Activated CD4-positive, alpha-beta T cell treated with anti-CD3 and anti-CD28 coated beads for 36 hours (primary cell): ENCODE measurements at regions of chr17 and their contacts with region 1.

Region 1: DNA sequence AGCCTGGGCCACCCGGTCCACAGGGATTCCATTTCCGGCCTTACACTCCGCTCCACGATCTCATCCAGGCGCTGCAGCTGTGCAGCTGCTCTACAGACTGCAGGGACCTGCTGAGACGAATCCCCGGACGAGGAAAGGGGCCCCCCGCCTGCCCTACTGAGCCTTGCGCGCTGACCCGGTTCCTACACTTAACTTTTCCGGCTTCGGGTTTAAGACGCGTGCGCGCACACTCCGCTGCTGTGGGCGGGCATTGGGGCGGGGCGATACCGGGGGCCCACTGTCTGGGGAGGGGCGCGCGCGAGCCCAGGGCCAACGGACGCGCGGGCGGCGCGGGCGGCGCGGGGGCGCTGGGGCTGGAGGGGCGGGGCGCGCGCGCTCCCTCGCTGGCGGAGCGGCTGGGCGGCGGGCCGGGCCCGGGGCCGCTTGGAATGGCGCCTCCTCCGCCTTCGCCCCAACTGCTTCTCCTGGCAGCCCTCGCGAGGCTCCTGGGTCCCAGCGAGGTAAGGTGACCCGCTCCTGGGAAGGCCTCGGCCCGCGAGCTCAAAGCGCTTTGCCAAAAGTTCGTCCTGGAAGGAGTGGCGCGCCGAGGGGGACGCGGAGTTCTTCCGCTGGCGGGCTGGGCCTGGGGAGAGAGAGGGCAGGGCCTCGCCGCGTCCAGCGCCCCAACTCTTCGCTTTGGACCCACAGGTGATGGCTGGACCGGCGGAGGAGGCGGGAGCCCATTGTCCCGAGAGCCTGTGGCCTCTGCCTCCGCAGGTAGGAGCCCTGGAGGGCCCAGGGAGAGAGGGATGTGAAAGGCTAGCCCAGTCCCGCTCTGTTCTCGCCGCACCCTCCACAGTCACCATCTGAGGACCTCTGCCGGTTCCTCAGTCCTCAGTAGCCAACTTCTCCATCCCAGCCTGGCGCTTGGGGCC is at the start of gene TP53I13:
- DNase-seq: peak; percentile 96
- ATAC-seq: peak; percentile 64
- H3K4me3 Mint-ChIP-seq: peak within 1 kb of the TSS; percentile 97
- H3K27ac Mint-ChIP-seq: peak within 1 kb of the TSS; percentile 96
- H3K4me1 Mint-ChIP-seq: peaks cover 30% of the 10 kb centered on the region
- H3K27me3 Mint-ChIP-seq: no peaks in the 10 kb centered on the region
- total RNA-seq, gene TP53I13: 37.7 to 41.5 TPM

Region 2: GRCh38 chr17:28661635-28662537 is 906.7 kb before region 1 on chr17 and contains the starts of genes SDF2 and SUPT6H:
- CTCF ChIA-PET with region 1: no interaction called
- POLR2A ChIA-PET with region 1: no interaction called
- intact Hi-C with region 1: loop called in 1 of 2 experiments (anchors 5 kb)
- DNase-seq: peak; percentile 98
- ATAC-seq: peak; percentile 87
- H3K4me3 Mint-ChIP-seq: peak within 1 kb of the TSS; percentile 94
- H3K27ac Mint-ChIP-seq: peak within 1 kb of the TSS; percentile 99
- H3K4me1 Mint-ChIP-seq: peaks cover 48% of the 10 kb centered on the region
- H3K27me3 Mint-ChIP-seq: no peaks in the 10 kb centered on the region
- total RNA-seq, gene SDF2: 36.6 to 37.2 TPM
- total RNA-seq, gene SUPT6H: 80.6 to 85.8 TPM

Region 3: DNA sequence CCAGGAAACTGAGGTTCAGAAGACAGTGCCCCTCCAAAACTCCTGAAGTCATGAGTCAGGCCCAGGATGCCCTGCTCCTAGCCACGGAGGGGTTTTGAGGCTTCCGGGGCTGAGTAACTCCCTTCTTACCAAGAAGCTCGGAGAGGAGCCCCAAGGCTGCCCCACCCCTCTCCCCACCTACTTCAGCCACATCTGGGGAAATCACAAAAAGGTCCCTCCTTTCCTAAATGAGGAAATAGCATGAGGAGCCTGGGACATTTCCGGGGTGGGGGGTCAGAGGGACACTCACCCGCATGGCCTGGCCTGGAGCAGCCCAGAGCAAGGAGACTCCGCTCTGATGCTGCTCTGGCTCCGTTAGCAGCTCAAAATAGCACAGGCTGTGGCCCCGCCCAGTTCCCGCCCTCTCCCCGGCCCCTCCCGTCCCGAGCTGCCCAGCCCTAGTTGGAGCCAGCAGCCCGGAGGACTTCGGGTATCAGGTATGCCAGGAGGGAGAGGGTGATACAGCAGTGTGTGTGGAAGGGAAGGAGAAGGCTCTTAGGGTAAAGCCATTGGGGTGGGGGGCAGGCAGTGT is 428.5 kb before region 1 on chr17:
- CTCF ChIA-PET with region 1: no interaction called
- POLR2A ChIA-PET with region 1: no interaction called
- intact Hi-C with region 1: loop called in 1 of 2 experiments (anchors 5 kb)
- DNase-seq: peak; percentile 92
- ATAC-seq: peak; percentile 60
- H3K4me3 Mint-ChIP-seq: peak overlapping the region; percentile 89
- H3K27ac Mint-ChIP-seq: peak overlapping the region; percentile 97
- H3K4me1 Mint-ChIP-seq: peaks cover 74% of the 10 kb centered on the region
- H3K27me3 Mint-ChIP-seq: no peaks in the 10 kb centered on the region

Region 4: GRCh38 chr17:29495011-29495410 is 73.6 kb before region 1 on chr17:
- CTCF ChIA-PET with region 1: no interaction called
- POLR2A ChIA-PET with region 1: no interaction called
- intact Hi-C with region 1: no loop called
- DNase-seq: no peak
- ATAC-seq: no peak
- H3K4me3 Mint-ChIP-seq: no peak overlapping the region
- H3K27ac Mint-ChIP-seq: no peak overlapping the region
- H3K4me1 Mint-ChIP-seq: peaks cover 3% of the 10 kb centered on the region
- H3K27me3 Mint-ChIP-seq: no peaks in the 10 kb centered on the region

Region 5: DNA sequence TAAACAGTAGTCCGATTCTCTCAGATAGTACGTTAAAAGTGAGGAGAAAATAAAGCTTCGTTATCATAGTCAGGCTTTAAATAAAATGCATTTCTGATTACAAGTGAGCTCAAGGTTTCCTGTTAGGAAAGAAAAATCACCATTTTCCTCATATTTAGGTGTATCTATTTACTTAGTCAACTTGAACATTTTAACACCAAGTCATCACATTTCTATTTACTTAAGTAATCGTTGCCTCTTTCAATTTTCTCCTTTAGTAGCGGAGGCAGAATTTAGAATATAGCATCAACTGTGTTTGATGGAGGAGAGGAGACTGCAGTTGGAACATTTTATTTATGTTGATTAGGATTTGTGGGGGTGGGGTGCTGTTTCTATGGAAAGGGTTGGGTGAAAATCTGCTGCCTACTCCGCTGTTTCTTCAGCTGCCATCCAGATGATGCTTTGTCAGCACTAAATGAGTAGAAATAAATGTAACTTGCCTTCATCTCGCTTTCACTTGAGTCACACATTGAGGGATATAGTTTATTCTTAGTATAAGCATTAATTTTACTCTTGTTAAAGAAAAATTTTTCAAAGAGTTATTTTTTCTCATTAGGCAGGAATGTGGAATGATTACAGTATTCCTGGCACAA is 44.0 kb before region 1 on chr17:
- CTCF ChIA-PET with region 1: no interaction called
- POLR2A ChIA-PET with region 1: no interaction called
- intact Hi-C with region 1: no loop called
- DNase-seq: no peak
- ATAC-seq: no peak
- H3K4me3 Mint-ChIP-seq: no peak overlapping the region
- H3K27ac Mint-ChIP-seq: peak overlapping the region; percentile 19
- H3K4me1 Mint-ChIP-seq: peaks cover 1% of the 10 kb centered on the region
- H3K27me3 Mint-ChIP-seq: no peaks in the 10 kb centered on the region

Region 6: DNA sequence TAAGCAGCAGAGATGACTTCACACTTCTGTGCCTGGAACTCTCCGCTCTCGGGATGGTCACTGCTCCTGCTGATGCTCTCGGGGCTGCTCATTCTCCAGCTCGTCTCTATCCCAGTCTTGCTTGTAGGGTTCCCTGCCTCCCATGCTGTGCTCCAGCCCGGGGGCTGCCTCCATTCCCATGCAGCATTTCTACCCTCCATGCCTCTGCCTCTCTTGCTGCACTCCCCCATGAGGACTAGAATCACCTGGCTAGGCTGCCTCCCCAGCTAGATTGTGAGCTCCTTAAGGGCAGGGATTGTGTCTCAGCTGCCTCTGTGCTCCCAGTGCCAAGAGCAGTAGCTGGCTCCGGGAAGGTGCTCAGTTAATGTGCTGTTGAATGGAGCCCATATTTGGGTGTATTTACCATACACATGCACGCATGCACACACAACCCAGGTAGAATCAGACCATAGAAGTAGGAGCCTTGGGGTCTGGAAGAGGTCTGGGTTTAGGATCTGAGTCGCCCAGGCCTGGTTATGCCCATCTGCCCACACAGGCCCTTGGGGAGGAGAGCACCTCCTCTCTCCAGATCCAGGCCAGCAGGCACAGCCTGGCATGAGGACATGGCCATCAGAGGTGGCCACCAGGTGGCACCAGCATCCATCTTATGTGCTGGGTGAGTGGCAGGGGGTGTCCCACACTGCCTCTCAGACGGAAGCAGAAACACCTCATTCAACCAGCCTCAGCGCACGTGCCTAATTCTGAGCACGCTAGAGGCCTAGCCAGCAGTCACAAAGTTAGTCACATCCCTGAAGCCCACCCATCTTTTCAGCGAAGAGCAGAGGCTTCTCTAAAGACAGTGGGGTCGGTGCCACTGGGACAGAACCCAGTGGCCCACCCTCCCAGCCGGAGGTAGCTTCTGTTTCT is 11.5 kb after region 1 on chr17:
- CTCF ChIA-PET with region 1: interaction called, 19 read pairs
- POLR2A ChIA-PET with region 1: no interaction called
- intact Hi-C with region 1: no loop called
- DNase-seq: peak; percentile 96
- ATAC-seq: peak; percentile 97
- H3K4me3 Mint-ChIP-seq: no peak overlapping the region
- H3K27ac Mint-ChIP-seq: peak overlapping the region; percentile 72
- H3K4me1 Mint-ChIP-seq: peaks cover 18% of the 10 kb centered on the region
- H3K27me3 Mint-ChIP-seq: no peaks in the 10 kb centered on the region

Region 7: DNA sequence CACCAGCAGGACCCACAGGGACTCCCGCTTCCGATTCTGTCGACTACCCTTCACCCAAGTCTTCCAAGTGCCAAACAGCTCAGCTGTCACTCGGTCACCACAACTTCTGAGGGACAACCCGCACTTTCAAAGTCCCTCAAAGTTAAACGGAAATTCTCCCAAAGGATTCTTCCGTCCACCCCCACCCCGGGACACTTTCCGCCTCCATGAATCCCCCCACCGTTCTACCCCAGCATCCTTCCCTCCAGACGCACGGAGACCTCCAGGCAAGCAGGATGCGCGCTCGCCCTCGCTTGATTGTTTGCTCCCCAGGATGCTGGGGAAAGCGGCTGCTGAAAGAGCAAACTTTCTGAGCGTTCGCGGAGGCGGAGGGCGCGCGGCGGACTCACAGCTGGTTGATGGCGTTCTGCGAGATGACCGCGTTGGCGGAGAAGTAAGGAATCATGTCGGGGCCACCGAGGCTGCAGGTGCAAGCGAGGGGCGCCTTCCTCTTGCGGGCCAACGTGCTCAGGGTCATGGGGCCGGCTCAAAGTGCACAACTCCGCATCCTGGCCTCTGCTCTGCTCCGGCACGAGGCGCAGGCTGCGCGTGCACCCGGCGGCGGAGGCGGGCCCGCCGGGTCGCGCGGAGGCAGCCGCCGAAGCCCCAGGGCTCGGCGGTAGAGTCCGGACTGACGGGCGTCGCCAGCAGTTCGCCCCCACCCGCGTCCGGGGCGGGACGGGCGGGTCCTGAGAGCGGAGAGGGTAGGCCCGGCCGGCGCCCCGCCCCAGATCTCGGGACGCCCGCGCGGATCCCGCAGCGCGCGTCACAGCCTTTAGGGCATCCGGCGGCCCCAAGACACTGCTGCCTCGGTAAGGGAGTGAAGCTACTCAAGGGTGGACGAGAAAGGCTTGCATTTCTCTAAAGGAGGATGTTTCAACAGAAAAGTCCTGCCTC is 192.4 kb after region 1 on chr17:
- CTCF ChIA-PET with region 1: no interaction called
- POLR2A ChIA-PET with region 1: no interaction called
- intact Hi-C with region 1: loop called in 1 of 2 experiments (anchors 1 kb)
- DNase-seq: peak; percentile 97
- ATAC-seq: peak; percentile 89
- H3K4me3 Mint-ChIP-seq: peak overlapping the region; percentile 97
- H3K27ac Mint-ChIP-seq: peak overlapping the region; percentile 97
- H3K4me1 Mint-ChIP-seq: peaks cover 30% of the 10 kb centered on the region
- H3K27me3 Mint-ChIP-seq: no peaks in the 10 kb centered on the region